T-cell (primary cell): ENCODE measurements at regions of chr2 and their contacts with region 1.

Region 1: GRCh38 chr2:12176623-12177454 is 430.4 kb downstream of the LPIN1 start:
- DNase-seq: peak in 3 of 35 experiments; percentile 8 to 16 (median 14)
- ATAC-seq: peak; percentile 17 to 41 (median 36)
- H3K4me3 ChIP-seq: no peak overlapping the region
- H3K4me3 Mint-ChIP-seq: peak overlapping the region; percentile 22 to 62 (median 34)
- H3K27ac ChIP-seq: peak overlapping the region; percentile 60
- H3K27ac Mint-ChIP-seq: peak overlapping the region; percentile 83 to 88
- H3K4me1 ChIP-seq: peaks cover 25 to 28% of the 10 kb centered on the region in 2 experiments
- H3K4me1 Mint-ChIP-seq: peaks cover 38 to 60% (median 48%) of the 10 kb centered on the region in 3 donors
- H3K27me3 ChIP-seq: no peaks in the 10 kb centered on the region
- H3K27me3 Mint-ChIP-seq: no peaks in the 10 kb centered on the region

Region 2: DNA sequence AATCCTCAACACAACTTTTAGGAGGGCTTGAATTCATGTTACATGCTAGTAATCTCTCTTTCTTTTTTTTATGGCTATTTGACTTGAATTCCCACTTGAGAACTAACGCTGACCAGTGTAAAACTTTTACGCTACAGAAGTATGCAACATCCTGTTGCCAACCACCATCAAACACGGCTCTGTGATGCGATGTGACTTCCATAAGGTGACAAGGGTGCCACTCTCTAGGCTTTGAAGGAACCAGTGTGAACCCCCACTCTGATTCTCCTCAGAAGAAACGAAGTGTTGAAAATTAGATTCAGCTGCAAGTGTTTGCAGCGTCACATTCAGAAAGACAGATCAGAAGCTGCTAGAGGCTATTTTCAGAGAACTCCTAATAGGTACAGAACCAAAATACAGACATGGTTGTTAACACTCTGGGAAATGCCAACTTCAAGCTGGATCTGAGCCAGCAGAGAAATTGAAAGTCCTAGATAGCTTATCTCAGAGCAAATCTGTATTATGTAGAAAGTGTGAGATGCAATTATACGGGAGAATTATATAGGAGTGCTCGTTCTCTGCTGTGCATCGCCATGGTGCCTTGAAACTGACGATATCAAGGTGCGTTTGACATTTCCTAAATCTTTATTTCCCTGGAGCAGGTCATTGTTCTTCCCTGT is 159.2 kb before region 1 on chr2:
- CTCF ChIA-PET with region 1: no interaction called
- POLR2A ChIA-PET with region 1: no interaction called
- DNase-seq: no peak
- ATAC-seq: peak in 2 of 4 experiments; percentile 43 to 73
- H3K4me3 ChIP-seq: no peak overlapping the region
- H3K4me3 Mint-ChIP-seq: peak overlapping the region in 1 of 3 donors; percentile 24
- H3K27ac ChIP-seq: no peak overlapping the region
- H3K27ac Mint-ChIP-seq: no peak overlapping the region
- H3K4me1 ChIP-seq: peaks cover 0 to 2% of the 10 kb centered on the region in 2 experiments
- H3K4me1 Mint-ChIP-seq: peaks cover 12 to 23% (median 22%) of the 10 kb centered on the region in 3 donors
- H3K27me3 ChIP-seq: peaks cover 0 to 14% of the 10 kb centered on the region in 2 experiments
- H3K27me3 Mint-ChIP-seq: peaks cover 0 to 3% of the 10 kb centered on the region in 2 donors

Region 3: DNA sequence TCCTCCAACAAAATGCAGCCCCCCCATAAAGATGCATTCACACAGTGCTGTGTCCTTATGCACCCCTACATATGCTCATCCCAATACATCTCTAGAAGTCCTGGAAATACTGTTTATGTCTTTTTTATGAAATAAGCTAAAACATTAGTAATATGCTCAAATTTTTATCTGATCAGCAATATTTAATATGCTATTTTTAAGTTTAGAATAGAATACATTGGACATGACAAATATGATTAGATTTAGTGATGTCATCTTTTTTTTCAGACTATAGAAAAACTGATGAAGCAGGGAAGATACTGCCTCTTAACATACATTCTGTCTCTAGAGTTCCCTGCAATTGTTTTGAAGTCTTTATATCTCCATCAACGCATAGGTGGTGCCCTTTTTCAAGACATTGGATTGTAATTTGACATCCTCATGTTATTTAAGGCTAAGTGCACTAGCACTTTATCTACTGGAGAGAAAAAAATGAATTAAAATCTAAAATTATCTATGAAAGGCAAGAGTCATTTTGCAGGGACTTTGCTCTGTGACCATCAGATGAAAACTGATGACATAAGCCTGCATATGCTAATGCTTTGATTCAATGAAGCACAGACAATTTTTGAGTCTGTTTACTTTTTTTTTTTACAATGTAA is 35.1 kb before region 1 on chr2:
- CTCF ChIA-PET with region 1: no interaction called
- POLR2A ChIA-PET with region 1: no interaction called
- DNase-seq: no peak
- ATAC-seq: no peak
- H3K4me3 ChIP-seq: no peak overlapping the region
- H3K4me3 Mint-ChIP-seq: no peak overlapping the region
- H3K27ac ChIP-seq: no peak overlapping the region
- H3K27ac Mint-ChIP-seq: no peak overlapping the region
- H3K4me1 ChIP-seq: no peaks in the 10 kb centered on the region
- H3K4me1 Mint-ChIP-seq: peaks cover 4 to 11% (median 11%) of the 10 kb centered on the region in 3 donors
- H3K27me3 ChIP-seq: no peaks in the 10 kb centered on the region
- H3K27me3 Mint-ChIP-seq: no peaks in the 10 kb centered on the region

Region 4: GRCh38 chr2:12192762-12193161 is 15.9 kb after region 1 on chr2:
- CTCF ChIA-PET with region 1: no interaction called
- POLR2A ChIA-PET with region 1: interaction called in 1 of 2 experiments, 12 read pairs
- DNase-seq: peak in 10 of 35 experiments; percentile 3 to 38 (median 15)
- ATAC-seq: peak in 3 of 4 experiments; percentile 17 to 67 (median 46)
- H3K4me3 ChIP-seq: no peak overlapping the region
- H3K4me3 Mint-ChIP-seq: peak overlapping the region in 1 of 3 donors; percentile 15
- H3K27ac ChIP-seq: peak overlapping the region; percentile 31
- H3K27ac Mint-ChIP-seq: peak overlapping the region; percentile 75 to 76
- H3K4me1 ChIP-seq: peaks cover 5 to 8% of the 10 kb centered on the region in 2 experiments
- H3K4me1 Mint-ChIP-seq: peaks cover 17 to 21% (median 18%) of the 10 kb centered on the region in 3 donors
- H3K27me3 ChIP-seq: peaks cover 0 to 4% of the 10 kb centered on the region in 2 experiments
- H3K27me3 Mint-ChIP-seq: no peaks in the 10 kb centered on the region